ENCODE measurements at regions of chr1 and their contacts with region 1.

Region 1: GRCh38 chr1:178869119-178869697 is 1.7 kb downstream of the ANGPTL1 start:
- DNase-seq: no peak
- ATAC-seq: peak; percentile 68
- H3K4me3 ChIP-seq: peak overlapping the region; percentile 47 to 93
- H3K27ac ChIP-seq: peak overlapping the region in 1 of 2 donors; percentile 57
- H3K4me1 ChIP-seq: peaks cover 3% of the 10 kb centered on the region in 2 donors
- H3K27me3 ChIP-seq: no peaks in the 10 kb centered on the region

Region 2: DNA sequence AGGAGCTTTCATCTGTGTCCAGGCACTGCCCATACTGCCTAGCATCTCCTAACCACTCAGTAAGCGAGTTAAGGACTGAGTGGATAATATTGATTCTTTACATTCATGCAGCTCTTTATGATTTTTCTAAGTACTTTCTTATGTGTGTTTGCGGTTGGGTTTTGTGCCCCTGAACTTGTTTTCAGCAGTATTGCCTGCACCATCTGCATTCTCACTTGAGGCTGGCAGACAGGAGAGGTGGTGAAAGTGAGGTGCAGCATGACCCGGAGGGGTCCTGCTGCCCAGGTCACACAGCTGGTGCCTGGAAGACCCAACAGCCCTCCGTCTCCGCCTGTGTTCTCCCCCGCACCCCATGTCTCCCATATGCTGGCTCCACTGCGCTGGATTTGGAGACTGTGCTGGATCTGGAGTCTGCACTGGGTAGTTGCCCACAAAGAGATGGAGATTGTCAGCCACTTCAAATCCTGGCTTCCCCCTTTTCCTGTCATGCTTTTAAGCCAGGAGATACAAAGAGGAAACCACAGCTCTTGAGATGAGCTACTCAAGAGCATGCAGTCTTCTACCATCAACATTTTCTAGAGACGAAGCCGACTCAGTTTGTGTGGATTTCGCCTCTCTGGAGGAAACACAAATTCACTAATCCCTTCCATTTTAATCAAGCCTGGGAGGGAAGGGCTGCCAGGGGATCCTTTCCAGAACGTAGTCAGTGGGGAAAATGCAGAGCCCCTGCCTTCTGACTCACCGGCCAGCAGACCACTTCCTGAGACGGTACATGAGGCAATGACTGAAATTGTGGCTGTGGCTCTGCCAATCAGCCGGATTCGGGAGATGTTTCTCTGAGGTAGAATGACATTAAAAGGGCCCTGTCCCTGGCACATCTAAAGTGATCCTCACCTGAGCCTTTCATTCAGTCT is 73.3 kb after region 1 on chr1:
- intact Hi-C with region 1: loop called (anchors 2 to 5 kb)
- DNase-seq: peak in 1 of 2 donors; percentile 54
- ATAC-seq: no peak
- H3K4me3 ChIP-seq: no peak overlapping the region
- H3K27ac ChIP-seq: peak overlapping the region in 1 of 2 donors; percentile 10
- H3K4me1 ChIP-seq: peaks cover 0 to 4% of the 10 kb centered on the region in 2 donors
- H3K27me3 ChIP-seq: no peaks in the 10 kb centered on the region

Measured in aorta (tissue), 5 donors.